HCT116 (cell line): ENCODE measurements at regions of chr3 and their contacts with region 1.

Region 1: GRCh38 chr3:123328851-123329635 is 119.8 kb downstream of the ADCY5 start:
- DNase-seq: peak; percentile 37
- ATAC-seq: peak; percentile 98
- H3K4me3 ChIP-seq: no peak overlapping the region
- H3K27ac ChIP-seq: no peak overlapping the region
- H3K4me1 ChIP-seq: no peaks in the 10 kb centered on the region
- H3K27me3 ChIP-seq: peaks cover 4% of the 10 kb centered on the region; the same call in 1 of the 2 replicates
- CTCF ChIP-seq: peak; percentile 84 to 94 (median 92)
- POLR2A ChIP-seq: no peak
- RAD21 ChIP-seq: peak; percentile 89

Region 2: DNA sequence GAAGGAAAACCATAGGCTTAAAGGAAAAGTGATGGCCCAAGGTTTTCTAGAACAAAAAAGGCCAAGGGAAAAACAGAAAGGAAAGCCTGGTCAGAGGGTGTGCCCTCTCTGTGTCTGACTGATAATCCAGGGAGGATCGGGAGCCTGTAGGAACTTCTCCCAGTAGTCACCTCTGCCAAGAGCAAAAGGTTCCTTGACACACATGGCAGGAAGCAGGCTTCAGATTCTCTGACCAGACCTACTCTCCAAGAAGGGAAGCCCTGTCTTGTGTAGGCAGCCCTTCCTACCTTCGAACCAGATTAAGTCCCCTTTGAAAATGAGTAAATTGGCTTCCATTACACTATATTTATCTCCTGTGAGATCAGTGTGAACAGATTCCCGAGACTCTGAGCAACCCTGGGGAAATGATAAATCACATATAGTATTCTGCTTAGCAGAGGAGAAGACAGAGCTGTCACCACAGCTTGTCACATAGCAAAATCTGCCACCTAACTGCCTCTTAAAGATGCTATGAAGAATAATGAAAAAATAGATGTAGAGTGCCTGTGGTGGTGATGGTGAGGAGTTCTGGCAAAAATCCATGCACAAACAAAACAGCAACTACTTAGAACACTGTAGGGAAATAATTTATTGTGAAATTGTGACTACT is 609.6 kb before region 1 on chr3:
- CTCF ChIA-PET with region 1: no interaction called
- POLR2A ChIA-PET with region 1: no interaction called
- RAD21 ChIA-PET with region 1: no interaction called
- intact Hi-C with region 1: no loop called
- DNase-seq: no peak
- ATAC-seq: no peak
- H3K4me3 ChIP-seq: no peak overlapping the region
- H3K27ac ChIP-seq: no peak overlapping the region
- H3K4me1 ChIP-seq: no peaks in the 10 kb centered on the region
- H3K27me3 ChIP-seq: no peaks in the 10 kb centered on the region
- CTCF ChIP-seq: no peak
- POLR2A ChIP-seq: no peak
- RAD21 ChIP-seq: no peak

Region 3: GRCh38 chr3:123489400-123490004 is 160.5 kb after region 1 on chr3:
- CTCF ChIA-PET with region 1: interaction called, 12 read pairs
- POLR2A ChIA-PET with region 1: no interaction called
- RAD21 ChIA-PET with region 1: interaction called in 1 of 2 experiments, 3 read pairs
- intact Hi-C with region 1: loop called (anchors 1 kb)
- DNase-seq: peak; percentile 29
- ATAC-seq: peak; percentile 87
- H3K4me3 ChIP-seq: no peak overlapping the region
- H3K27ac ChIP-seq: no peak overlapping the region
- H3K4me1 ChIP-seq: no peaks in the 10 kb centered on the region
- H3K27me3 ChIP-seq: no peaks in the 10 kb centered on the region
- CTCF ChIP-seq: peak; percentile 87 to 95 (median 93)
- POLR2A ChIP-seq: no peak
- RAD21 ChIP-seq: peak; percentile 89

Region 4: DNA sequence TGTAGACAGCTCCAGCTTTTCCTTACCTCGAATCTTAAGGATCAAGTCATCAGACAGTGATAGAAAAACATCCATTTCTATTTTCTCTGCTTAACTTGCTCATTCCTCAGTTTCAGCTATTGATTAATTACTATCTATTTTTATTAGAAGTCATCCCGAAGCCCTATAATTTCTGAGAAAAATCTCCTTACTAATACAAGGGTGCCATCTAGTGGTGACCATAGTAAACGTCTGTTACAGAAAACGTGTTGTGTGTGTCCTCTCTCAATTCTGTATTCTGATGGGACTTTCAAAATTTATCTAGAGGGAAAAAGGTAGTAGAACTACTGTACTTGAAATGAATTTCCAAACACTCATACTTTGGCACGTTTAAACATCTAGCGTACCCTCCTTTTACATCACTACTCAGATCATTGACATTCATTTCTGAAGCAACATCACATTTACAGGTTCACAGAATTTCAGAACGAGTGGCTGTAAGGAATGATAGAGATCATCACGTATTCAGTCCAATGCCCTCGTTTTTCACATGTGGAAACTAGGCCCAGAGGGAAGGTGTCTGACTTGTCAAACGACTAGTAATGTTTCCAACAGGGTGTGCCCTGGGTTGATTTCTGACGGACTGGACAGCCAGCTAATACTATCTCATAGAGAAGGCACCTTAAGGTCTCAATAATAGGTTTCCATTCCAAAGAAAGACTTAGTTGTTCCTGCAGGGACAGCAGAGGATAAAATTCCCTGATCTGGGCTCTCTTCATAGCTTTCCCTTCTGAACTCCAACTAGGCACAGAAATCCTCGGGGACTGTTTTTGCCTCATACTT is 230.2 kb after region 1 on chr3:
- CTCF ChIA-PET with region 1: interaction called, 8 read pairs
- POLR2A ChIA-PET with region 1: no interaction called
- RAD21 ChIA-PET with region 1: no interaction called
- intact Hi-C with region 1: loop called (anchors 2 kb)
- DNase-seq: peak; percentile 40
- ATAC-seq: peak; percentile 46; the same call in 1 of the 2 replicates
- H3K4me3 ChIP-seq: no peak overlapping the region
- H3K27ac ChIP-seq: no peak overlapping the region
- H3K4me1 ChIP-seq: no peaks in the 10 kb centered on the region
- H3K27me3 ChIP-seq: no peaks in the 10 kb centered on the region
- CTCF ChIP-seq: peak; percentile 49 to 84 (median 64); a peak in 5 of 6 replicates
- POLR2A ChIP-seq: no peak
- RAD21 ChIP-seq: peak; percentile 66